ENCODE measurements at regions of chr2 and their contacts with region 1.

Region 1: DNA sequence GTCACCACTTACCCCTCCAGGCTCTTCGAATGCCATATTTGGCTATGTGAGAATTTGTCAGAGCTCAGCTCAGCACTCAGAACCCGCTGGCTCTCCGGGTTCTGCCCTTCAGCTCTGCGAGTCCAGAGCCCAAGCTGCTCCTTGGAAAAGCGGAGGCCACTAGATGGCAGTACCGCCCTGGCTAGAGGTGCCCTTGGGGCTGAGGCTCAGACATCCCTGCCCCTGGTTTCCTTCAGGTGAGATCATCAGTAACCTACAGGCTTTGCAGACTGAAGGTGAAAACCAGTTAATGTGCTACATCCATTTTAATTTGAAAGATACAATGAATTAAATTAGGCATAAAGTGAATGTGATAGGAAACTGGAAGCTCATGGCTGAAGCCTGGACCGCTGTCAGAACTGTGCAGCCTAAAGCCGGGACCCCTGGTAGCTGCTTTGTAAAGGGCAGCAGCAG is 285.6 kb downstream of the AGAP1 start:
- DNase-seq: peak; percentile 29
- H3K4me3 ChIP-seq: no peak overlapping the region
- H3K27ac ChIP-seq: no peak overlapping the region
- H3K27me3 ChIP-seq: no peaks in the 10 kb centered on the region
- CTCF ChIP-seq: peak; percentile 97

Region 2: GRCh38 chr2:235766278-235766677 is 13.2 kb before region 1 on chr2:
- CTCF ChIA-PET with region 1: interaction called, 66 read pairs
- POLR2A ChIA-PET with region 1: no interaction called
- DNase-seq: peak; percentile 57
- H3K4me3 ChIP-seq: no peak overlapping the region
- H3K27ac ChIP-seq: no peak overlapping the region
- H3K27me3 ChIP-seq: no peaks in the 10 kb centered on the region
- CTCF ChIP-seq: peak; percentile 87

Region 3: DNA sequence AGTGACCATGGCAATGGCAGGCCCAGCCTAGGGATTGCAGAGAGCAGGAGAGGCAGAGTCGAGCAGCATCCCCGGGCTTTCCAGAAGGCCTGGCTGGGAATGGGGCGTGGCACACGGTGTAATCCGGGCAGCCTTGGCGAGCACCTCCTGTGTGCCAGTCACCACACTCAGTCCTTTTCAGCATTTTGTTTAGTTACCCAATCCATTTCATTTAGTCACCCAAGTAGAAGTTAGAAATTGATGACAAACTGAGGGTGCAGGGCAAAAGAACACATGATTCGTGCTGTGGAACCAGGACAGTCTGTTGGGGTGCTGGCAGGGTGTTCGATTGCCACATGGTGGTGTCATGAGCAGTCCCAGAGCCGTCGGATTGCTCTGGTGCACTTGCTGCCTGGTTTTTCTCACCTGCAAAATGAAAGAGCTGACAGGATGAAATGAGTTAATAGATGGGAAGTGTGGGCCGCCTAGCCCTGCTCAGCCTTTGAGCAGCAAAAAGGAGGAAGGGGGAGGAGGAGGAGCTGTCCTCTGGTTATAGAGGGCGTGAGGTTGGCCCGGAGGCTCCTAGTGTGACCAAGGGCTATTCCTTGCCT is 13.8 kb after region 1 on chr2:
- CTCF ChIA-PET with region 1: interaction called, 36 read pairs
- POLR2A ChIA-PET with region 1: no interaction called
- DNase-seq: no peak
- H3K4me3 ChIP-seq: no peak overlapping the region
- H3K27ac ChIP-seq: no peak overlapping the region
- H3K27me3 ChIP-seq: no peaks in the 10 kb centered on the region
- CTCF ChIP-seq: peak; percentile 40

Region 4: GRCh38 chr2:235802538-235803427 is 23.3 kb after region 1 on chr2:
- CTCF ChIA-PET with region 1: interaction called, 17 read pairs
- POLR2A ChIA-PET with region 1: no interaction called
- DNase-seq: no peak
- H3K4me3 ChIP-seq: no peak overlapping the region
- H3K27ac ChIP-seq: no peak overlapping the region
- H3K27me3 ChIP-seq: no peaks in the 10 kb centered on the region
- CTCF ChIP-seq: peak; percentile 42

Region 5: DNA sequence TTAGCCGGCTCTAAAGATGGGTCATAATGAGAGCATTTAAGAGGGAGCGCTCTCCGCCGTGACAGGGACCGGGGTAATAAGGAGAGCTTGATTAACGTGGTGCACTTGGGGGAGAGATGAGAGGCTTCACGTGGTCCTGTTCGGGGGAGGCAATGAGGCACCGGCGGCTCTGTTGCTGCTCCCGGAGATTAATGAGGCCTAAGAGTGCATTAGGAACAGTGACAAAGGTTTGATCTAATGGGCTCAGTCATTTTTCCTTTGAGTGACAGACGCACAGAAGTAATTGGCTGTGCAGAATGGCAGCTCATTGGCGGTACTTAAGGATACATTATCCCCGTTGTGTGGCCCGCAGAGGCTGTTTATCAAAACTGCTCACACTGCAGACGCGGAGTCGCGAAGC is 138.0 kb after region 1 on chr2:
- CTCF ChIA-PET with region 1: no interaction called
- POLR2A ChIA-PET with region 1: no interaction called
- DNase-seq: no peak
- H3K4me3 ChIP-seq: no peak overlapping the region
- H3K27ac ChIP-seq: no peak overlapping the region
- H3K27me3 ChIP-seq: no peaks in the 10 kb centered on the region
- CTCF ChIP-seq: no peak

Region 6: GRCh38 chr2:236143811-236144210 is 364.3 kb after region 1 on chr2:
- CTCF ChIA-PET with region 1: interaction called, 16 read pairs
- POLR2A ChIA-PET with region 1: no interaction called
- DNase-seq: no peak
- H3K4me3 ChIP-seq: no peak overlapping the region
- H3K27ac ChIP-seq: no peak overlapping the region
- H3K27me3 ChIP-seq: peaks cover 14% of the 10 kb centered on the region
- CTCF ChIP-seq: no peak

Region 7: GRCh38 chr2:236167297-236168109 is 388.0 kb after region 1 on chr2:
- CTCF ChIA-PET with region 1: interaction called, 14 read pairs
- POLR2A ChIA-PET with region 1: no interaction called
- DNase-seq: no peak
- H3K4me3 ChIP-seq: peak overlapping the region; percentile 32; the same call in 1 of the 2 replicates
- H3K27ac ChIP-seq: no peak overlapping the region
- H3K27me3 ChIP-seq: peaks cover 92% of the 10 kb centered on the region
- CTCF ChIP-seq: peak; percentile 15; the same call in 1 of the 2 replicates